ENCODE measurements at regions of chr1 and their contacts with region 1.

Region 1: DNA sequence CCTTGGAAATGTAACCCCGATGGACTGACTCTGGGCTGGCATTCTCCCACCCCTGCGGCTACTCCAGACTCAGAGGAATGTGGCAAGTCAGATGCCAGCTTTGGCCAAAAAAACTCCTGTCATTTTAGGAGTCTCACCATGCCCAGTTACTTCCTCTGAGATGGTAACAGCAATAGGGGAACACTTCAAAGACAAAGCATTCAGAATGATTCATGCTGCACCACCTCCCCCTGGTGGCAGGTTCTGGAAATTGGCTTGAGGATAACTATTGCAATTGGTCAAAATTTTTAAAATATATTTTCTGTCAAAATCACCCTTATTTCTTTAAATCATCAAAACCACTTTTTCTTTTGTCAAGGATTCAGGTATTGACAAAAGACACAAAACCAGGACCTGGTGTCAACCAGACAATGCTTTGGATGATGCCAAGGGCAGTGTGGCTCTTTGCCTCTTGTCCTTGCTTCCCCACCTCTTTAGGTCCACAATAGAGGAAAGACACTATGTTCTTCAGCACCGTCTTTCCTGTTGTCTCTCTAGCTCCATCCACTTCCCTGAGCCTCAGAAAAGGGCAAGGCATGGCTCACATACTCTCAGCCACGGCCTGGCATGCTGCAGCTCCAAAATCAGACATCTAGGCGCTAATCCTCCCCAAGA is 9.9 kb upstream of the CDCA8 start:
- DNase-seq: peak; percentile 87
- ATAC-seq: peak; percentile 89
- H3K4me3 Mint-ChIP-seq: no peak overlapping the region
- H3K27ac Mint-ChIP-seq: peak overlapping the region; percentile 60
- H3K4me1 Mint-ChIP-seq: peaks cover 3% of the 10 kb centered on the region
- H3K27me3 Mint-ChIP-seq: no peaks in the 10 kb centered on the region

Region 2: DNA sequence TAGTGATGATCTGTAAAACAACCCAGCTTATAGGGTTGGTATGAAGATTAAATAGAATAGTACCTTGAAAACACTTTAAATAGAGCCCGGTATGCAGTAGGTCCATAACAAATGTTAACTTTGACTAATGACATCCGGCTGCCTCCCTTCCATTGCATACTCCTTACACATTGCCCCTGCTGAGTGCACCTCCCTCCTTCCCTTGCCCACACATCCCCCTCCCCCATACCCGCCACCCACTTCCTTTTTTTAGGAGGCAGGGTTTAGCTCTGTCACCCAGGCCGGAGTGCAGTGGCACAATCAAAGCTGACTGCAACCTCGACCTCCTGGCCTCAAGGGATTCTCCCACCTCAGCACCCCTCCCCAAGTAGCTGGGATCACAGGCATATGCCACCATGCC is 232.5 kb before region 1 on chr1:
- CTCF ChIA-PET with region 1: interaction called, 15 read pairs
- POLR2A ChIA-PET with region 1: no interaction called
- intact Hi-C with region 1: loop called (anchors 1 to 2 kb)
- DNase-seq: peak; percentile 66
- ATAC-seq: peak; percentile 68
- H3K4me3 Mint-ChIP-seq: no peak overlapping the region
- H3K27ac Mint-ChIP-seq: no peak overlapping the region
- H3K4me1 Mint-ChIP-seq: peaks cover 12% of the 10 kb centered on the region
- H3K27me3 Mint-ChIP-seq: peaks cover 7% of the 10 kb centered on the region

Region 3: GRCh38 chr1:37561133-37562132 is 121.0 kb before region 1 on chr1:
- CTCF ChIA-PET with region 1: interaction called, 4 read pairs
- POLR2A ChIA-PET with region 1: no interaction called
- intact Hi-C with region 1: loop called (anchors 1 kb)
- DNase-seq: peak; percentile 58
- ATAC-seq: peak; percentile 78
- H3K4me3 Mint-ChIP-seq: no peak overlapping the region
- H3K27ac Mint-ChIP-seq: no peak overlapping the region
- H3K4me1 Mint-ChIP-seq: peaks cover 2% of the 10 kb centered on the region
- H3K27me3 Mint-ChIP-seq: no peaks in the 10 kb centered on the region

Region 4: GRCh38 chr1:38046884-38047602 is 364.6 kb after region 1 on chr1:
- CTCF ChIA-PET with region 1: no interaction called
- POLR2A ChIA-PET with region 1: no interaction called
- intact Hi-C with region 1: no loop called
- DNase-seq: peak; percentile 82
- ATAC-seq: peak; percentile 87
- H3K4me3 Mint-ChIP-seq: peak overlapping the region; percentile 64
- H3K27ac Mint-ChIP-seq: no peak overlapping the region
- H3K4me1 Mint-ChIP-seq: peaks cover 11% of the 10 kb centered on the region
- H3K27me3 Mint-ChIP-seq: peaks cover 41% of the 10 kb centered on the region

Region 5: GRCh38 chr1:38312753-38313152 is 630.3 kb after region 1 on chr1:
- CTCF ChIA-PET with region 1: no interaction called
- POLR2A ChIA-PET with region 1: no interaction called
- intact Hi-C with region 1: no loop called
- DNase-seq: no peak
- ATAC-seq: no peak
- H3K4me3 Mint-ChIP-seq: no peak overlapping the region
- H3K27ac Mint-ChIP-seq: no peak overlapping the region
- H3K4me1 Mint-ChIP-seq: no peaks in the 10 kb centered on the region
- H3K27me3 Mint-ChIP-seq: peaks cover 25% of the 10 kb centered on the region

Region 6: DNA sequence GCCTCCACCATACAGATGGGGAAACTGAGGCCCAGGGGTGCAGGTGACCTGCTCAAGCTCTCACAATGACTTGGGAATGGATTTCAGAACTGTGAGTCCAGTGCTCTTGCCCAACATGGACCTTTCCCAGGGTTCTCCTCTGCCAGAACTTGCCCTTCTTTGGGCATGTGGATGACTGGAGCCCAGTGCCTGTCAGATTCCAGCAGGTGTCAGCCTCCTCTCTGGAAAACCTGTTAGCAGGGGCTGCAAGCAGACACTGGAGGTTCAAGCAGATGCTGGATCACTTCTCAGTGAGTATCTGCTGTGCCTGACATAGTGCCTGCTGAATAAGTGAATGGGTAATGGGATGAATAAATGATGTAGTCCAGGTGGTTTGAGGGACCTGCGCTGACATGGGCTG is 678.3 kb after region 1 on chr1:
- CTCF ChIA-PET with region 1: no interaction called
- POLR2A ChIA-PET with region 1: no interaction called
- intact Hi-C with region 1: no loop called
- DNase-seq: no peak
- ATAC-seq: no peak
- H3K4me3 Mint-ChIP-seq: no peak overlapping the region
- H3K27ac Mint-ChIP-seq: no peak overlapping the region
- H3K4me1 Mint-ChIP-seq: no peaks in the 10 kb centered on the region
- H3K27me3 Mint-ChIP-seq: peaks cover 3% of the 10 kb centered on the region